H1 (cell line): ENCODE measurements at regions of chr9 and their contacts with region 1.

Region 1: GRCh38 chr9:130707225-130707976 is 13.8 kb downstream of the EXOSC2 start:
- DNase-seq: peak in 1 of 2 experiments; percentile 73
- H3K4me3 ChIP-seq: no peak overlapping the region
- H3K27ac ChIP-seq: no peak overlapping the region
- H3K4me1 ChIP-seq: no peaks in the 10 kb centered on the region
- H3K27me3 ChIP-seq: no peaks in the 10 kb centered on the region
- CTCF ChIP-seq: peak in 2 of 3 experiments; percentile 47 to 50; a peak in 2 of 4 replicates
- EP300 ChIP-seq: no peak
- POLR2A ChIP-seq: no peak
- RAD21 ChIP-seq: peak; percentile 70 to 71

Region 2: DNA sequence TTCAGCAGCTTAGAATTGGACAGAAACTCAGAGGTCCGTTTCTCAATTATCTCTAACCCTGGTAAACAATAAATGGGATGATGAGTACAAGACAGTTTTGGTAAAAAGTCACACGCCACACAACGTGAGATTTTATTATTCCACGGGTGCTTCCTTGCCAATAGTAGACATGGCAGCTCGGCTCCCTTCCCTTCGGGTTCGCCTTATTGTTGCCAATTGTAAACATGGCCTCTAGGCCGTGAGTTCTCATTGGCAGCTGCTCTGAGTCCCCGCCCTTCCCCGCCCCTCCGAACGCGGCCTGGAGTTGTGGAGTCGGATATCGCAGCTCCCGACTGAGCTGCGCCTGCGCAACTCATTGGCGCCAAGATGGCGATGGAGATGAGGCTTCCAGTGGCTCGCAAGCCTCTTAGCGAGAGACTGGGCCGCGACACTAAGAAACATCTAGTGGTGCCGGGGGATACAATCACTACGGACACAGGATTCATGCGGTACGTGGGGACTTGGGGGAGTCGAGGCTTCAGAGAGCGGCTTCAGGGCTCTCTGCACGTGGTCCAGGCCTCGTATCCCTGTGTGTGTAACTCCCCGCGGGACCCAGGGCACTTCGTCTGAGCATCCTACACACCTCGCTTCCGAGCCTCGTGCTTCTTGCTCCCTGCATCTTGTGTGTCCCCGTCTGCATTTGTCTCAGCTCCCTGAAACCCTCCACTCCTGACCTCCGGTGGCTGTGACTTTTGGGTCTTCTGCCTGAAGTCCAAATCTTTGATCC is 13.8 kb before region 1 on chr9 and contains the start of gene EXOSC2:
- CTCF ChIA-PET with region 1: interaction called, 15 read pairs
- POLR2A ChIA-PET with region 1: interaction called, 18 read pairs
- DNase-seq: peak; percentile 86 to 90
- H3K4me3 ChIP-seq: peak within 1 kb of the TSS; percentile 94 to 100 (median 98)
- H3K27ac ChIP-seq: peak within 1 kb of the TSS; percentile 89
- H3K4me1 ChIP-seq: peaks cover 4 to 9% (median 6%) of the 10 kb centered on the region in 4 experiments; a peak in 6 of 7 replicates
- H3K27me3 ChIP-seq: no peaks in the 10 kb centered on the region
- CTCF ChIP-seq: no peak
- EP300 ChIP-seq: no peak
- POLR2A ChIP-seq: peak; percentile 90 to 92
- RAD21 ChIP-seq: no peak
- total RNA-seq, gene EXOSC2: 84.3 and 93.6 TPM in 2 replicates

Region 3: DNA sequence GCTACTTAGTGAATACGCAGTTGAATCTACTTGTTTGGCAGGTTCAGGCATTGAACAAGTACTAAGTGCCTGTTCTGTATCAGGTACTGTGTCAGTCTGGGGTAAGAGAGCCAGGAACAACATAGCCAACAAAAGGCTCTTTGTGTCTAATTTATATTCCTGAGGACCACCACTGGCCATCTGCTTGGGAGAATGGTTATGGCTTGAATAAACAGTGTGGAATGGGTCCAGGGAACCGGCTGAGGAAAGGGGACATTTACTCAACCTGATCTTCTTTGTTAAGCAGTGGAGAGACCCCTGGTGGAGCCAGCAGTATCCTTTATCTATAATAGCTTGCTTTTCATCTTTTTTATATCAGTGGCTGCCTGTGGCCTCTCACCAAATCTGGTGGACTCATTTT is 24.7 kb after region 1 on chr9:
- CTCF ChIA-PET with region 1: interaction called, 22 read pairs
- POLR2A ChIA-PET with region 1: interaction called, 4 read pairs
- DNase-seq: no peak
- H3K4me3 ChIP-seq: no peak overlapping the region
- H3K27ac ChIP-seq: no peak overlapping the region
- H3K4me1 ChIP-seq: no peaks in the 10 kb centered on the region; a peak in 1 of 7 replicates
- H3K27me3 ChIP-seq: peaks cover 0 to 1% (median 0%) of the 10 kb centered on the region in 4 experiments; a peak in 1 of 7 replicates
- CTCF ChIP-seq: peak in 1 of 3 experiments; percentile 38; a peak in 1 of 4 replicates
- EP300 ChIP-seq: no peak
- POLR2A ChIP-seq: no peak
- RAD21 ChIP-seq: 0 out of 4 replicates have a peak, but pooled peaks of 1 of the 2 experiments have one; percentile 2